ENCODE measurements at regions of chr10 and their contacts with region 1.

Region 1: DNA sequence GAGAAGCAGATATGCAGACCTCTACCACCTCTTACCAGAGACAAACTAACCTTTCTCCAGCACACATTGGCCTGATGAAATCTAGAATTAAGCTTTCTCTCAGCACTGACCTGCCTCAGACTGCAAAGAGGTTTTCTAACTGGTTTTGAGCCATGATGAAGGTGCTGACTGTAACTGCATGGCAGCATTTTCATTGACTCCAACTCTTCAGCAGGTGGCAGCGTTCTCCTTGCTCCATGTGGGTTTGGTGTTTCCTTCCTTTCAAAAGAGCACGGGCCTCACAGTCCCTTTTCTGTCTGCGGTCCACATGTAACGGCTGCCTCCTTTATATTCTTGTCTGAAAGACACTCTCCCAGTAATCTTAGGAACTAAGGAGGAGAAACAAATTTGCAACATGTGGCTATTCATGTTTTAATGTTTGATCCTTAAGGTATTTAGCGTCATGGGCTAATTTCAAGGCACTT is 12.6 kb downstream of the KLLN start:
- DNase-seq: peak; percentile 14 to 66 (median 30)
- ATAC-seq: peak; percentile 97
- H3K4me3 ChIP-seq: no peak overlapping the region
- H3K27ac ChIP-seq: no peak overlapping the region
- H3K4me1 ChIP-seq: no peaks in the 10 kb centered on the region
- H3K27me3 ChIP-seq: no peaks in the 10 kb centered on the region
- CTCF ChIP-seq: peak; percentile 62 to 66 (median 63)
- EP300 ChIP-seq: no peak
- POLR2A ChIP-seq: no peak
- RAD21 ChIP-seq: peak; percentile 69 to 79

Region 2: GRCh38 chr10:87700031-87700796 is 150.6 kb before region 1 on chr10:
- CTCF ChIA-PET with region 1: no interaction called
- POLR2A ChIA-PET with region 1: no interaction called
- in situ Hi-C with region 1: no loop called
- intact Hi-C with region 1: no loop called
- DNase-seq: no peak
- ATAC-seq: no peak
- H3K4me3 ChIP-seq: no peak overlapping the region
- H3K27ac ChIP-seq: no peak overlapping the region
- H3K4me1 ChIP-seq: no peaks in the 10 kb centered on the region
- H3K27me3 ChIP-seq: peaks cover 0 to 9% of the 10 kb centered on the region in 2 experiments; a peak in 4 of 5 replicates
- CTCF ChIP-seq: no peak
- EP300 ChIP-seq: no peak
- POLR2A ChIP-seq: no peak
- RAD21 ChIP-seq: no peak

Region 3: DNA sequence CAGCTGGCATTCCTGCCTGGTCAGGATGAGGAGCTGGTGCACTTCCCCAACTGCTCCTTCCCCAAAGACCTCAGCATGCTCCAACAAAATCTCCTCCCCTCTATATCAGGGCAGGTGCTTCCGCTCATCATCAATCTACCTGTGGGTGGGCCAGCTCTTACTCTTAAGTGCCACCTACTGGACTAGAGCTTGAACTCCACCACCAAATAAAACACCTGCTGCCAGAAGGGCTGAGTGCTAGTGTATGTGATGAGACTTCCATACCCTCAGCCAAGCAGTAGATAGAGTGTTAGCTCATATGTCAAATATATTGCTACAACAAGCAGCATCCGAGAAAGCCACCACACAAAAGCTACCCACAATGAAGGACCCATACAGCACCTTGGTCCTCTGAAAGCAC is 468.0 kb after region 1 on chr10:
- CTCF ChIA-PET with region 1: no interaction called
- POLR2A ChIA-PET with region 1: no interaction called
- in situ Hi-C with region 1: no loop called
- intact Hi-C with region 1: loop called (anchors 5 kb)
- DNase-seq: peak in 1 of 4 experiments; percentile 1
- ATAC-seq: no peak
- H3K4me3 ChIP-seq: no peak overlapping the region
- H3K27ac ChIP-seq: no peak overlapping the region
- H3K4me1 ChIP-seq: no peaks in the 10 kb centered on the region
- H3K27me3 ChIP-seq: no peaks in the 10 kb centered on the region
- CTCF ChIP-seq: peak in 1 of 3 experiments; percentile 12; a peak in 1 of 6 replicates
- EP300 ChIP-seq: no peak
- POLR2A ChIP-seq: no peak
- RAD21 ChIP-seq: peak in 1 of 2 experiments; percentile 19; a peak in 1 of 4 replicates

Region 4: DNA sequence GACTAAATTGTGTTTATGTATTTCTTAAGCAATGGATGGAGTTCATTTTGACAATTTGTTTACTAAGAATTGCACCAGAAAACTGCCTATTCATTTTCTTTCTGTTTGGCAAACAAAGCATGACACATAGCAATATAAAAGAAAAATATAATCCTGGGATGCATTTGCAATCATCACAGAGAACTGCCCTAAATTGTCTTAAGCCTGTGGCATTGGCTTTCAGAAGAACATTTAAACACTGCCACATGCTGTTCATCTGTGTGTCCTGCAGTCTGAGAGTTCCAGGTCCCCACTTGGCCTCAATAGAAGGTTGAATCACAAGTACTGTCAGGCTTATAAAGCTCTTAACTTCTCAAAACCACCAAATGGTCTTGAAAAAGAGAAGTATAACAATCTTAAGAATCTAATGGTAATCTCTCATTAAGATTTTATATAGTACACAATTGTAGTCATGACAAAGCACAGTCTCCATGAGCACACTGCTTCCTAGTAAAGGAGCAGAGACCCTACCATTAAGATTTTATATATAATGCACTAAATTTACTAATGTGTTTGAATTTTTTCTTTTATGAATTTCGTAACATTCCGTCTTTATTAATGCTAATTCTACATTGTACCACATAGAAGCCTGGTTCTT is 702.5 kb after region 1 on chr10:
- CTCF ChIA-PET with region 1: no interaction called
- POLR2A ChIA-PET with region 1: no interaction called
- in situ Hi-C with region 1: no loop called
- intact Hi-C with region 1: loop called (anchors 2 kb)
- DNase-seq: peak; percentile 3 to 9 (median 4)
- ATAC-seq: peak; percentile 29; the same call in 1 of the 3 replicates
- H3K4me3 ChIP-seq: no peak overlapping the region
- H3K27ac ChIP-seq: no peak overlapping the region
- H3K4me1 ChIP-seq: no peaks in the 10 kb centered on the region
- H3K27me3 ChIP-seq: no peaks in the 10 kb centered on the region
- CTCF ChIP-seq: peak in 1 of 3 experiments; percentile 29; a peak in 1 of 6 replicates
- EP300 ChIP-seq: no peak
- POLR2A ChIP-seq: no peak
- RAD21 ChIP-seq: peak; percentile 69 to 70

Measured in K562 (cell line).